ENCODE measurements at regions of chr2 and their contacts with region 1.

Region 1: DNA sequence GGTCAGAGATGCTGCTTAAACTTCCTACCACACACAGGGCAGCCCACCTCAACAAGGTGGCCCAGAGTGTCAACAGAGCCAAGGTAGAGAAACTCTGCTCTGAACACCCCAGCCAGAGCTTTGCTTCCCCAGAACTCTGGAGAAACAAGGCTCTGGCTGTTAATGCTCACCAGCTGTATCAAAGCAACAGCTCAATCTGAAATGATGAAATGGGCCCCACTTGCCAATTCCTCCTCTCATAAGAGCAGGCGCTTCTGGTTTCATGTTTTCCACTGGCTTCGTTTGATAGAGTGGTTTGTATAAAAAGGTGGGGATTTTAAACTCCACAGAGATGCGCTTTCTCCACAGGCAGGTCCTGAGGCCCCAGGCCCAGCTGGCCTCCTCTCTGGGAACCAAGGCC is 60.9 kb upstream of the TFCP2L1 start:
- DNase-seq: no peak
- ATAC-seq: peak; percentile 38 to 59
- H3K4me3 ChIP-seq: no peak overlapping the region
- H3K27ac ChIP-seq: no peak overlapping the region
- H3K4me1 ChIP-seq: peaks cover 6% of the 10 kb centered on the region
- H3K27me3 ChIP-seq: no peaks in the 10 kb centered on the region

Region 2: GRCh38 chr2:121128754-121129659 is 216.9 kb before region 1 on chr2:
- intact Hi-C with region 1: loop called in 1 of 4 experiments (anchors 10 kb)
- DNase-seq: peak in 2 of 3 donors; percentile 39 to 66
- ATAC-seq: peak; percentile 41 to 42
- H3K4me3 ChIP-seq: no peak overlapping the region
- H3K27ac ChIP-seq: no peak overlapping the region
- H3K4me1 ChIP-seq: no peaks in the 10 kb centered on the region
- H3K27me3 ChIP-seq: no peaks in the 10 kb centered on the region